ENCODE measurements at regions of chr3 and their contacts with region 1.

Region 1: GRCh38 chr3:10205451-10206165 is 40.9 kb downstream of the IRAK2 start:
- DNase-seq: peak; percentile 76
- H3K4me3 Mint-ChIP-seq: peak overlapping the region; percentile 37
- H3K27ac Mint-ChIP-seq: peak overlapping the region; percentile 89
- H3K4me1 Mint-ChIP-seq: peaks cover 42% of the 10 kb centered on the region
- H3K27me3 Mint-ChIP-seq: no peaks in the 10 kb centered on the region
- CTCF ChIP-seq: no peak

Region 2: DNA sequence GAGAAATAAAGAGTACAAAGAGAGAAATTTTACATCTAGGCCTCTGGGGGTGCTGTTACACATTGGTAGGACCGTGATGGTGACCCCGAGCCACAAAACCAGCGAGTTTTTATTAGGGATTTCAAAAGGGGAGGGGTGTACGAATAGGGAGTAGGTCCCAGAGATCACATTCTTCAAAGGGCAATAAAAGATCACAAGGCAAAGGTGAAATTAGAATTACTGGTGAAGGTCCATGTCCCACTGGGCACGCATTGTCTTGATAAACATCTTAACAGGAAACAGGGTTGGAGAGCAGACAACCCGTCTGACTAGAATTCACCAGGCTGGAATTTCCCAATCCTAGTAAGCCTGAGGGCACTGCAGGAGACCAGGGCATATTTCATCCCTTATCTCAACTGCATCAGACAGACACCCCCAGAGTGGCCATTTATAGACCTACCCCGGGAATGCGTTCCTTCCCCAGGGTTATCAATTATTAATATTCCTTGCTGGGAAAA is 36.6 kb before region 1 on chr3:
- CTCF ChIA-PET with region 1: no interaction called
- intact Hi-C with region 1: loop called (anchors 1 kb)
- DNase-seq: peak; percentile 62
- H3K4me3 Mint-ChIP-seq: peak overlapping the region; percentile 54
- H3K27ac Mint-ChIP-seq: peak overlapping the region; percentile 75
- H3K4me1 Mint-ChIP-seq: peaks cover 40% of the 10 kb centered on the region
- H3K27me3 Mint-ChIP-seq: no peaks in the 10 kb centered on the region
- CTCF ChIP-seq: peak; percentile 59

Region 3: DNA sequence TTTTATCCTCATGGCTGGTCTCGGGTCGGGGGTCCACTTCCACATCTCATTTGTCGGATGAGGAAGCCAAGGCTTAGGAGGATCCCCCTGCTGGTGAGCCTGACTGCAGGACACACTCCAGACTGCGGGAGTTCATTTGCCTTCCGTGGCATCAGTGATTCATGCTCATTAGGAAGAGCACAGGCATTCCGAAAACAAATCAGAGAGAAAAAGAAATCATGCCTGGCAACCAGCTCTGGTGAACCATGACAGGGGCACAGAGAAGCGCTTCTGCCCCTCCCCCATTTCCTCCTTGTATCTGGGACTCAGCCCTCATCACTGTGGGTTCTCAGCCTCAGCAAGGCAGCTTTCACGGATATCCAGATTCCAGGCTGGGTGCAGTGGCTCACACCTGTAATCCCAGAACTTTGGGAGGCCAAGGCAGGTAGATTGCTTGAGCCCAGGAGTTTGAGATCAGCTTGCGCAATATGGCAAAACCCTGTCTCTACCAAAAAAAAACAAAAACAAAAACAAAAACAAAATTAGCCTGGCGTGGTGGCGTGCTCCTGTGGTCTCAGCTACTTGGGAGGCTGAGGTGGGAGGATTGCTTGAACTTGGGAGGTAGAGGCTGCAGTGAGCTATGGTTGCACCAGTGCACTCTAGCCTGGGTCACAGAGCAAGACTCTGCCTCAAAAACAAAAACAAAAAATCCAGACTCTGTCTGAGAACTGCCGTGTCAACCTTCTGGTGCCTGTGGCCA is 12.5 kb before region 1 on chr3:
- CTCF ChIA-PET with region 1: interaction called, 24 read pairs
- intact Hi-C with region 1: no loop called
- DNase-seq: no peak
- H3K4me3 Mint-ChIP-seq: no peak overlapping the region
- H3K27ac Mint-ChIP-seq: peak overlapping the region; percentile 93
- H3K4me1 Mint-ChIP-seq: peaks cover 60% of the 10 kb centered on the region
- H3K27me3 Mint-ChIP-seq: no peaks in the 10 kb centered on the region
- CTCF ChIP-seq: no peak

Measured in Calu3 (cell line).